ENCODE measurements at regions of chr6 and their contacts with region 1.

Region 1: DNA sequence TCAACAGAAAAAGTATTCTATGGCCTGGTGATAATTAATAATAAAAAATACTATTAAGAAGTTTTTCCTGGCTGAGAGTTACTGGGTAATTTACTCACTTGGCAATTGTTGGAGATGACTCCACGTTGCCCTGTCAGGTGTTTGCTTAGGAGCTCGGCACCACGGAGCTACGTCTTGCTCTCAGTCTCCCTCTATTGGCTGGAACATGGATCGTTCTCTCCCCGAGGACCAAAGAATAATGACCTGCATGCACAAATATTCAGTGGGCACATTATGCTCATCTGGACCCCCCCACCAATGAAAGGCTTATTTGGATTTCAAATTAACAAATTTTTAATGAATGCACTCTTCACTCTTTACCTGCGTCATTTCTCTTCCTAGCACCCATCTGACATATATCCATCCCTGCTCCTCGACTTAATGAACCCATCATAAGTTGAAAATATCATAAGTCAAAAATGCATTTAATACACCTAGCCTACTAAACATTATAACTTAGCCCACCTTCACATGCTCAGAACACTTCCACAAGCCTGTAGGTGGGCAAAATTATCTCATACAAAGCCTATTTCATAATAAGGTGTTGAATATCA is 71.0 kb upstream of the CD83 start:
- DNase-seq: peak; percentile 82
- H3K4me3 Mint-ChIP-seq: no peak overlapping the region
- H3K27ac Mint-ChIP-seq: no peak overlapping the region
- H3K4me1 Mint-ChIP-seq: peaks cover 3% of the 10 kb centered on the region
- H3K27me3 Mint-ChIP-seq: peaks cover 35% of the 10 kb centered on the region

Region 2: DNA sequence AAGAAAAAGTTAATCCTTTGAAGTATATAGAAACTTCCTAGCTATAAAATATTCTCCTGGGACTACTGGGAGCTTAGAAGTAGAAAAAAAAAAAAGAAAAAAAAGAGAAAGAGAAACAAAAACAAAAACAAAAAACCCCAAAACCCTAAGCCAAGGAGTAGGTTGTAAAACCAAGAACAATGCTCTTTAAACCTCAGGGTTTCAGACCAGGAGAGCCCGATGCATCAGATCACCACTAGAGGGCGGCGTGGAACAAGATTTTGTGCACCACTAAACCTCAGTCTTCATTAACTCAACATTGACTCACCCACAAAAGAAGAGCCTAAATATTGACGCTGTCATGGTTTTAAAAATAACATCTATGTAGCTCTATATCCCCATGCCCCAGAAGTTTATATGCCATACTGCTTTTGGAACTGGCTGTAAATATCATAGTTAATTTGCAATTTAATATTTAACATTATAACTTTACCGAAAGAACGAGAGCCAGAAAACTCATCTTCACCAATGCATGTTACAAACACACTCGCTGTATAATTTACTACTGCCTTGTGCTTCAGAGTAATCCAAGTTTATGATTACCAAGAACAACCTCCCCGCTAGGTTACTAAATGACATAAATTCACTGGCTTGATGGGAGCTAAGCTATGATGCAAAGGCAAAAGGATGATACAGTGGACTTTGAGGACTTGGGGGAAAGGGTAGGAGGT is 251.4 kb before region 1 on chr6:
- intact Hi-C with region 1: loop called (anchors 1 kb)
- DNase-seq: peak; percentile 95
- H3K4me3 Mint-ChIP-seq: no peak overlapping the region
- H3K27ac Mint-ChIP-seq: peak overlapping the region; percentile 51
- H3K4me1 Mint-ChIP-seq: peaks cover 14% of the 10 kb centered on the region
- H3K27me3 Mint-ChIP-seq: no peaks in the 10 kb centered on the region

Region 3: GRCh38 chr6:13908955-13909381 is 137.6 kb before region 1 on chr6:
- intact Hi-C with region 1: loop called (anchors 2 kb)
- DNase-seq: peak; percentile 80
- H3K4me3 Mint-ChIP-seq: no peak overlapping the region
- H3K27ac Mint-ChIP-seq: no peak overlapping the region
- H3K4me1 Mint-ChIP-seq: peaks cover 6% of the 10 kb centered on the region
- H3K27me3 Mint-ChIP-seq: peaks cover 45% of the 10 kb centered on the region

Region 4: GRCh38 chr6:14144678-14145113 is 98.1 kb after region 1 on chr6:
- intact Hi-C with region 1: loop called (anchors 1 kb)
- DNase-seq: peak; percentile 91
- H3K4me3 Mint-ChIP-seq: no peak overlapping the region
- H3K27ac Mint-ChIP-seq: no peak overlapping the region
- H3K4me1 Mint-ChIP-seq: peaks cover 6% of the 10 kb centered on the region
- H3K27me3 Mint-ChIP-seq: no peaks in the 10 kb centered on the region